Prostate gland (tissue), 2 donors: ENCODE measurements at regions of chrX and their contacts with region 1.

Region 1: DNA sequence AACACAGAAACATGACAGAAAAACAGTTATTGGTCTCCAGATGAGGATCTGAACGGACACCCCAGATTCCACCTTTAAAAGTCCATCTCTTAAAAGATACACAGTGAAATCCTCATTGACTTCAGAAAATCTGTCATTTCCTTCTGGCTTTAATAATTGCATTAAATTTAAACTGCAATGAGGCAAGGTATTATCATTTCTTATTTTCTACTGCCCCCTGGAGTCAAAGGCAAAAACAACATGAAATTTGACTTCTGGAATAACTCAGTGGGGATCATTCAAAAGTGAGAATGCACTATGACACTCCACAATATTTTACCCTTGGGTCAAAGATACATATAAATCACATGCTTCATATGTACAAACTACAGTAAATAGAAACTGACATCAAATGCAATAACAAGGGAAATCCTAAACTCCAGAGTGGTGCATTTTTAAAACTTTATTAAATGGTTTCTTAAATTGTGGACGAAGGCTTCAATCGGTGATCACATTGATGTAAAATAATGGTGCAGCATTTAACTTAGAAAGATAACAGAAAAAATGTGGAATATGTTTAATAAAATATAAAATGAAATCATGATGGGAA is 56.4 kb upstream of the SPANXN1 start:
- DNase-seq: no peak
- H3K4me3 ChIP-seq: no peak overlapping the region
- H3K27ac ChIP-seq: no peak overlapping the region
- H3K4me1 ChIP-seq: no peaks in the 10 kb centered on the region
- H3K27me3 ChIP-seq: no peaks in the 10 kb centered on the region
- CTCF ChIP-seq: peak in 1 of 4 experiments; percentile 17
- POLR2A ChIP-seq: no peak

Region 2: DNA sequence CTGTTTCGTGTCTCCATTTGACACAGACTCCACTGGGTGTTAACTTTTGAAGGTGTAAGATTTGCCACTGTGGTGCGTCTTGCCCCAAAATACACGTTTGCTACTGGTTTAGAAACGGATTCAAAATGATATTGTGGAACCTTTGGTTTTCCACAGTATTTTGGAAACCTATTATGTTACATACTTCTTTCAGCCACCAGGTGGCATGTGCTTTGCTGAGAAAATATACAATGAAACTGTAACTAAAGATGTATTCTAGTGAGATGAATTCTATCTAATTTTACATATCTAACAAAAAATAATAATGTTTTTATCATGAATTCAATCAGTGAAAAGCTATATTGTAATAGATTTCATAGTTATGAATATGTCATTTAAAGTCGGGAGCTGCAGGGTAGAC is 1526.6 kb before region 1 on chrX:
- intact Hi-C with region 1: loop called (anchors 10 kb)
- DNase-seq: no peak
- H3K4me3 ChIP-seq: no peak overlapping the region
- H3K27ac ChIP-seq: no peak overlapping the region
- H3K4me1 ChIP-seq: no peaks in the 10 kb centered on the region
- H3K27me3 ChIP-seq: no peaks in the 10 kb centered on the region
- CTCF ChIP-seq: peak in 2 of 4 experiments; percentile 20 to 30
- POLR2A ChIP-seq: no peak

Region 3: GRCh38 chrX:144388738-144389137 is 802.2 kb before region 1 on chrX:
- intact Hi-C with region 1: no loop called
- DNase-seq: no peak
- H3K4me3 ChIP-seq: no peak overlapping the region
- H3K27ac ChIP-seq: no peak overlapping the region
- H3K4me1 ChIP-seq: no peaks in the 10 kb centered on the region
- H3K27me3 ChIP-seq: no peaks in the 10 kb centered on the region
- CTCF ChIP-seq: no peak
- POLR2A ChIP-seq: no peak